K562 (cell line): ENCODE measurements at regions of chr3 and their contacts with region 1.

Region 1: GRCh38 chr3:45656575-45657363 is 32.4 kb upstream of the SACM1L start:
- DNase-seq: peak; percentile 86 to 96 (median 88)
- ATAC-seq: peak; percentile 95
- H3K4me3 ChIP-seq: no peak overlapping the region
- H3K27ac ChIP-seq: no peak overlapping the region
- H3K4me1 ChIP-seq: 0 out of 5 replicates have a peak, but pooled peaks cover 0 to 3% of the 10 kb centered on the region in 2 experiments
- H3K27me3 ChIP-seq: no peaks in the 10 kb centered on the region
- CTCF ChIP-seq: peak; percentile 96 to 99 (median 98)
- EP300 ChIP-seq: no peak
- POLR2A ChIP-seq: no peak
- RAD21 ChIP-seq: peak; percentile 96 to 98

Region 2: GRCh38 chr3:45043728-45044299 is 613.0 kb before region 1 on chr3:
- CTCF ChIA-PET with region 1: interaction called, 18 read pairs
- POLR2A ChIA-PET with region 1: no interaction called
- in situ Hi-C with region 1: loop called (anchors 5 kb)
- intact Hi-C with region 1: loop called (anchors 2 kb)
- DNase-seq: peak; percentile 47 to 82 (median 68)
- ATAC-seq: peak; percentile 64
- H3K4me3 ChIP-seq: no peak overlapping the region
- H3K27ac ChIP-seq: peak overlapping the region; percentile 12; the same call in 1 of the 3 replicates
- H3K4me1 ChIP-seq: peaks cover 8 to 45% of the 10 kb centered on the region in 2 experiments; a peak in 4 of 5 replicates
- H3K27me3 ChIP-seq: no peaks in the 10 kb centered on the region
- CTCF ChIP-seq: peak; percentile 27 to 69 (median 34); a peak in 4 of 6 replicates
- EP300 ChIP-seq: peak; percentile 49; the same call in 1 of the 2 replicates
- POLR2A ChIP-seq: no peak
- RAD21 ChIP-seq: peak; percentile 52 to 81; a peak in 3 of 4 replicates

Region 3: GRCh38 chr3:45224824-45225464 is 431.8 kb before region 1 on chr3:
- CTCF ChIA-PET with region 1: interaction called, 4 read pairs
- POLR2A ChIA-PET with region 1: no interaction called
- in situ Hi-C with region 1: no loop called
- intact Hi-C with region 1: loop called (anchors 5 kb)
- DNase-seq: peak; percentile 75 to 89 (median 78)
- ATAC-seq: peak; percentile 84
- H3K4me3 ChIP-seq: peak overlapping the region; percentile 65
- H3K27ac ChIP-seq: peak overlapping the region; percentile 43; the same call in 2 of the 3 replicates
- H3K4me1 ChIP-seq: peaks cover 18 to 19% of the 10 kb centered on the region in 2 experiments; a peak in 4 of 5 replicates
- H3K27me3 ChIP-seq: peaks cover 9 to 23% of the 10 kb centered on the region in 2 experiments; a peak in 4 of 5 replicates
- CTCF ChIP-seq: peak; percentile 68 to 89 (median 89)
- EP300 ChIP-seq: no peak
- POLR2A ChIP-seq: no peak
- RAD21 ChIP-seq: peak; percentile 94 to 96

Region 4: DNA sequence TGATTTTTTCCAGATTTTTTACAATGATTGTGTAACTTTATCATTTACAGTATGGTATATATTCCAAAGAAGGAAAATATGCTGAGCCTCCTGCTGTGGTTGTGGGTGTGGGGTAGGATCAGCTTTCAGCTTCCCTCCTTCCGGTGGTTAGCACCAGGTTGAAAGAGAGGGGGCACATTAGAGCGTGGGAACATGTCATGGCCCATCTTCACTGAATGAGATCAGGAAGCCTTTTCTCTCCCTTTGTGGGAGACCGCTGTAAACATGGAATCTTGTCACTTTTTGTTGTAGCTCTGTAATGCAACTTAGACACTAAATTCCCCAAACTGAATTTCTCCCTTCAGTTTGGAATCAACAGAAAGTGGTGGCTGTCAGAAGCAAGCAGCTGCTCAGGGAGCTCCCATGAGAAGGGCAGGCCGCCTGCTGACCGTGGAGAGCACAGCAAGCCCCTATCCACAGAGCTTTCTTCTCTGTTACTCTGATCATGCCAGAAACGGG is 148.9 kb before region 1 on chr3:
- CTCF ChIA-PET with region 1: interaction called, 59 read pairs
- POLR2A ChIA-PET with region 1: interaction called, 3 read pairs
- in situ Hi-C with region 1: loop called (anchors 5 kb)
- intact Hi-C with region 1: loop called (anchors 1 kb)
- DNase-seq: peak in 3 of 4 experiments; percentile 39 to 59 (median 55)
- ATAC-seq: peak; percentile 89
- H3K4me3 ChIP-seq: no peak overlapping the region
- H3K27ac ChIP-seq: no peak overlapping the region
- H3K4me1 ChIP-seq: 0 out of 5 replicates have a peak, but pooled peaks cover 0 to 6% of the 10 kb centered on the region in 2 experiments
- H3K27me3 ChIP-seq: no peaks in the 10 kb centered on the region
- CTCF ChIP-seq: peak; percentile 59 to 70 (median 62)
- EP300 ChIP-seq: no peak
- POLR2A ChIP-seq: no peak
- RAD21 ChIP-seq: peak; percentile 67 to 80

Region 5: GRCh38 chr3:45593708-45594609 is 62.8 kb before region 1 on chr3:
- CTCF ChIA-PET with region 1: interaction called, 8 read pairs
- POLR2A ChIA-PET with region 1: interaction called, 3 read pairs
- in situ Hi-C with region 1: no loop called
- intact Hi-C with region 1: loop called (anchors 1 kb)
- DNase-seq: peak; percentile 85 to 95 (median 94)
- ATAC-seq: peak; percentile 90
- H3K4me3 ChIP-seq: peak overlapping the region; percentile 71
- H3K27ac ChIP-seq: peak overlapping the region; percentile 83
- H3K4me1 ChIP-seq: peaks cover 34 to 57% of the 10 kb centered on the region in 2 experiments; a peak in 4 of 5 replicates
- H3K27me3 ChIP-seq: peaks cover 3 to 18% of the 10 kb centered on the region in 2 experiments; a peak in 3 of 5 replicates
- CTCF ChIP-seq: no peak
- EP300 ChIP-seq: no peak
- POLR2A ChIP-seq: peak; percentile 68
- RAD21 ChIP-seq: no peak